Activated CD4-positive, alpha-beta T cell treated with anti-CD3 and anti-CD28 coated beads, Interleukin-2, amount 10 ng/mL, durations not matched to agents 24 days and 14 days (primary cell): ENCODE measurements at regions of chr5 and their contacts with region 1.

Region 1: GRCh38 chr5:172714491-172715421 is 56.2 kb downstream of the DUSP1 start:
- DNase-seq: peak; percentile 90
- H3K4me3 Mint-ChIP-seq: no peak overlapping the region
- H3K27ac Mint-ChIP-seq: no peak overlapping the region
- H3K4me1 Mint-ChIP-seq: peaks cover 2% of the 10 kb centered on the region
- H3K27me3 Mint-ChIP-seq: peaks cover 10% of the 10 kb centered on the region

Region 2: GRCh38 chr5:172833686-172834414 is 119.1 kb after region 1 on chr5 and contains the start of gene ERGIC1:
- intact Hi-C with region 1: loop called (anchors 5 kb)
- DNase-seq: peak; percentile 95
- H3K4me3 Mint-ChIP-seq: peak within 1 kb of the TSS; percentile 89
- H3K27ac Mint-ChIP-seq: peak within 1 kb of the TSS; percentile 76
- H3K4me1 Mint-ChIP-seq: peaks cover 27% of the 10 kb centered on the region
- H3K27me3 Mint-ChIP-seq: no peaks in the 10 kb centered on the region
- total RNA-seq, gene ERGIC1: 47.1 and 47.3 TPM in 2 replicates

Region 3: GRCh38 chr5:172932313-172933017 is 217.7 kb after region 1 on chr5:
- intact Hi-C with region 1: loop called (anchors 1 kb)
- DNase-seq: peak; percentile 90
- H3K4me3 Mint-ChIP-seq: no peak overlapping the region
- H3K27ac Mint-ChIP-seq: no peak overlapping the region
- H3K4me1 Mint-ChIP-seq: no peaks in the 10 kb centered on the region
- H3K27me3 Mint-ChIP-seq: no peaks in the 10 kb centered on the region

Region 4: GRCh38 chr5:173204185-173204979 is 489.6 kb after region 1 on chr5:
- intact Hi-C with region 1: loop called (anchors 10 kb)
- DNase-seq: peak; percentile 76
- H3K4me3 Mint-ChIP-seq: no peak overlapping the region
- H3K27ac Mint-ChIP-seq: no peak overlapping the region
- H3K4me1 Mint-ChIP-seq: no peaks in the 10 kb centered on the region
- H3K27me3 Mint-ChIP-seq: peaks cover 17% of the 10 kb centered on the region